Dendritic cell treated with granulocyte-macrophage colony-stimulating factor and Interleukin-4, amounts not matched to agents 40 ng/mL and 50 ng/mL, for 4 days (primary cell): ENCODE measurements at regions of chr11 and their contacts with region 1.

Region 1: GRCh38 chr11:66069715-66070603 is at the start of gene PACS1:
- H3K4me3 Mint-ChIP-seq: peak within 1 kb of the TSS; percentile 89
- H3K27ac Mint-ChIP-seq: peak within 1 kb of the TSS; percentile 96
- H3K4me1 Mint-ChIP-seq: peaks cover 63% of the 10 kb centered on the region
- H3K27me3 Mint-ChIP-seq: no peaks in the 10 kb centered on the region

Region 2: DNA sequence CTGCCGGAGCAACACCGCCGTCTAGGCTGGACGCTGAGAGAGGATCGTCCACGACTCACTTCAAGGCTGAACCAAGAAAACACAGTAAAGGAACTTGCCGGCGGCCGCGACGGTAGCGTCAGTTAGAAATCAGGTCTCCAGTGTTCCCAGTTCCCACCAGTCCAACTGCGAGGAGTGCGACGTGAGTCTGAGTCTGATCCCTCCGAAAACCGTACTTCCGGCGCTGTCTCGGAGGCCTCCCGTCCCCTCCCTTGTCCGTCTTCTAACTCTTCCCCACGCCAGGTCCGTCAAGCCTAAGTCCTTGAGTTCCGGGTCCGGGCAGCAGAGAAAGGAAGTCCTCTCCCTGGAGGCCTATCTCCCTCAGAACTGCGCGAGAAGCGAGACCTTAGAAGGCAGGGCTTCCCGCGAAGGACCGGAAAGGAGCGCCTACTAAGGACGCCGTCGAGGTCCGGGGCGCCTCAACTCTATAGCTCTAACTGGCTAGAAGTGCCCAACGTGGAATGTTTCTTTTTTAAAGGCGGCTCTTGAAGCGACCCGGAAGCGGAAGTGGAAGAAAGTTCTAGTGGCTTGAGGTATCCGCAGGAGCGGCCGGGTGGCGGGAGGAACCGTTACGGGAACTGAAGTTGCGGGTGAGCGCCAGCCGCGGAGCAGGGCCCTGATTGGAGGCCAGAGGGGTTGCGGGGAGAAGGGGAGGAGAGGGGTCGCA is 67.9 kb before region 1 on chr11 and contains the starts of genes BANF1 and EIF1AD:
- intact Hi-C with region 1: loop called (anchors 10 kb)
- H3K4me3 Mint-ChIP-seq: peak within 1 kb of the TSS; percentile 98
- H3K27ac Mint-ChIP-seq: peak within 1 kb of the TSS; percentile 100
- H3K4me1 Mint-ChIP-seq: peaks cover 35% of the 10 kb centered on the region
- H3K27me3 Mint-ChIP-seq: no peaks in the 10 kb centered on the region

Region 3: GRCh38 chr11:66136752-66137123 is 66.8 kb after region 1 on chr11:
- intact Hi-C with region 1: loop called (anchors 2 kb)
- H3K4me3 Mint-ChIP-seq: no peak overlapping the region
- H3K27ac Mint-ChIP-seq: peak overlapping the region; percentile 55
- H3K4me1 Mint-ChIP-seq: peaks cover 22% of the 10 kb centered on the region
- H3K27me3 Mint-ChIP-seq: no peaks in the 10 kb centered on the region